CD4-positive, alpha-beta T cell (primary cell): ENCODE measurements at regions of chr17 and their contacts with region 1.

Region 1: DNA sequence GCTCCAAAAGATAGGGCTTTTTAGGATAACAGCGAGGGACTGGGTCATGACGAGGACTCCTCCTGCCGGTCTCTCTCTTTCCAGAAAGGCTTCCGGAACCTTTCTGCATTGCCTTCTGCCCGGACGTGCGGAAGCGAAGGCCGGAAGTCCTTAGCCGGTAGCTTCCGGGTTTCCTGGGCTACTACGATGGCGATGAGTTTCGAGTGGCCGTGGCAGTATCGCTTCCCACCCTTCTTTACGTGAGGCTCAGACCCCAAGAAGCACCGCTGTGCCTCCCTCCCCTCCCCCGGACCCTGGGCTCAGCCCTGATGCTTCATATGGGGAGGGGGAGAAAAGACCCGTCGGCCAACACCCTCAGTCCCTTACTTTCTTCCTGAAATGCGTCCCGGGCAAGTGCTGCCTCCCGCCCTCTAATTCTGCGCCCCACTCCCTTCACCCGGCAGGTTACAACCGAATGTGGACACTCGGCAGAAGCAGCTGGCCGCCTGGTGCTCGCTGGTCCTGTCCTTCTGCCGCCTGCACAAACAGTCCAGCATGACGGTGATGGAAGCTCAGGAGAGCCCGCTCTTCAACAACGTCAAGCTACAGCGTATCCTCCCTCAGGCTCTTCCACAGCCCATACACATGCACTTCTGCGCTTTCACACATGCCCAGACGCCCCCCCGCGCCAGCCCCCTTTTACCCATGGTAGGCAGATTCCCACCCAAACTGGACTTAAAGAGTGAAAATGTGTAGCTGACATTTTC is at the start of gene VPS25:
- DNase-seq: peak; percentile 58 to 89 (median 71)
- ATAC-seq: peak; percentile 93
- H3K4me3 ChIP-seq: peak within 1 kb of the TSS; percentile 71
- H3K4me3 Mint-ChIP-seq: peak within 1 kb of the TSS; percentile 96
- H3K27ac ChIP-seq: peak within 1 kb of the TSS; percentile 68 to 76
- H3K27ac Mint-ChIP-seq: peak within 1 kb of the TSS; percentile 92
- H3K4me1 ChIP-seq: peaks cover 14% of the 10 kb centered on the region
- H3K4me1 Mint-ChIP-seq: peaks cover 34% of the 10 kb centered on the region
- H3K27me3 ChIP-seq: no peaks in the 10 kb centered on the region
- H3K27me3 Mint-ChIP-seq: peaks cover 3% of the 10 kb centered on the region
- CTCF ChIP-seq: no peak
- total RNA-seq, gene VPS25: 40.6 to 45.7 TPM

Region 2: GRCh38 chr17:42744806-42745617 is 28.5 kb before region 1 on chr17 and contains the start of gene EZH1:
- CTCF ChIA-PET with region 1: no interaction called
- POLR2A ChIA-PET with region 1: interaction called, 3 read pairs
- intact Hi-C with region 1: loop called in 1 of 2 experiments (anchors 2 kb)
- DNase-seq: peak; percentile 77 to 97 (median 92)
- ATAC-seq: peak; percentile 92
- H3K4me3 ChIP-seq: peak within 1 kb of the TSS; percentile 86
- H3K4me3 Mint-ChIP-seq: peak within 1 kb of the TSS; percentile 96
- H3K27ac ChIP-seq: peak within 1 kb of the TSS; percentile 41 to 77
- H3K27ac Mint-ChIP-seq: peak within 1 kb of the TSS; percentile 91
- H3K4me1 ChIP-seq: peaks cover 29% of the 10 kb centered on the region
- H3K4me1 Mint-ChIP-seq: peaks cover 26% of the 10 kb centered on the region
- H3K27me3 ChIP-seq: peaks cover 0 to 3% of the 10 kb centered on the region in 2 experiments
- H3K27me3 Mint-ChIP-seq: peaks cover 5% of the 10 kb centered on the region
- CTCF ChIP-seq: no peak
- total RNA-seq, gene EZH1: 73.3 to 76.1 TPM

Region 3: GRCh38 chr17:42760652-42761581 is 12.5 kb before region 1 on chr17 and contains the start of gene RAMP2:
- CTCF ChIA-PET with region 1: interaction called, 13 read pairs
- POLR2A ChIA-PET with region 1: interaction called, 6 read pairs
- intact Hi-C with region 1: no loop called
- DNase-seq: peak in 3 of 14 experiments; percentile 13 to 41 (median 37)
- ATAC-seq: peak; percentile 39
- H3K4me3 ChIP-seq: peak within 1 kb of the TSS; percentile 10
- H3K4me3 Mint-ChIP-seq: peak within 1 kb of the TSS; percentile 67
- H3K27ac ChIP-seq: no peak within 1 kb of the TSS
- H3K27ac Mint-ChIP-seq: no peak within 1 kb of the TSS
- H3K4me1 ChIP-seq: peaks cover 15% of the 10 kb centered on the region
- H3K4me1 Mint-ChIP-seq: peaks cover 9% of the 10 kb centered on the region
- H3K27me3 ChIP-seq: peaks cover 47% of the 10 kb centered on the region in 2 experiments
- H3K27me3 Mint-ChIP-seq: peaks cover 79% of the 10 kb centered on the region
- CTCF ChIP-seq: no peak
- total RNA-seq, gene RAMP2: not detected

Region 4: GRCh38 chr17:42798383-42799380 is 25.2 kb after region 1 on chr17 and contains the starts of genes CNTD1 and COA3:
- CTCF ChIA-PET with region 1: no interaction called
- POLR2A ChIA-PET with region 1: interaction called, 4 read pairs
- intact Hi-C with region 1: loop called in 1 of 2 experiments (anchors 2 kb)
- DNase-seq: peak; percentile 59 to 86 (median 68)
- ATAC-seq: peak; percentile 99
- H3K4me3 ChIP-seq: peak within 1 kb of the TSS; percentile 92
- H3K4me3 Mint-ChIP-seq: peak within 1 kb of the TSS; percentile 92
- H3K27ac ChIP-seq: peak within 1 kb of the TSS in 1 of 2 donors; percentile 3
- H3K27ac Mint-ChIP-seq: peak within 1 kb of the TSS; percentile 63
- H3K4me1 ChIP-seq: peaks cover 30% of the 10 kb centered on the region
- H3K4me1 Mint-ChIP-seq: peaks cover 19% of the 10 kb centered on the region
- H3K27me3 ChIP-seq: no peaks in the 10 kb centered on the region
- H3K27me3 Mint-ChIP-seq: no peaks in the 10 kb centered on the region
- CTCF ChIP-seq: no peak
- total RNA-seq, gene CNTD1: not detected
- total RNA-seq, gene COA3: 4.0 to 4.5 TPM

Region 5: DNA sequence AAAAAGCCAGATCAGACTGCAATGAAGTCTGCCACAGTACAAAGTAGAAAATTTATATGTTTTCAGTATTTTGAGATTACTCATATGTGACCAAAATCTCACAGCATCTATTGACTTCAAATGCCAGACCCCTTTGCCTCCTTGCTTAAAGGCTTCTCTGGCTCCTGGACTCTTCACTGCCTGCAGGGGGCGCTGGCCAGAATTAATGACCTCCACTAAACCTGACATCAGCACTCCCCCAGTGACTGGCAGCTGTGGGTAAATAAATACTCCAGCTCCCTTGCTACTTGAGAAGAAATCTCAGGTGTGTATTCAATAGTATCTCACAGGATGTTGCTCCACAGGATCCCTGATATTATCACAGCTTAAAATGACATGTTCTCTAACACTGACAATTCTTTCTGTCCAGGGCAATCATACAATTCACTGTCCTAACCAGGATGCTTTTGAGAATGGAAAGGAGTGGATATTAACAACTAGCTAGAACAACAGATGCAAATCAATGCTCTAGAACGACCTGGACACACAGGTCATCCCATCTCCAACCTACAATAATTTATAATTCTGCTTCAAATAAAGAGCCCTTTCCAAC is 46.6 kb after region 1 on chr17:
- CTCF ChIA-PET with region 1: interaction called, 7 read pairs
- POLR2A ChIA-PET with region 1: interaction called, 17 read pairs
- intact Hi-C with region 1: loop called in 1 of 2 experiments (anchors 2 kb)
- DNase-seq: peak; percentile 29 to 79 (median 48)
- ATAC-seq: no peak
- H3K4me3 ChIP-seq: no peak overlapping the region
- H3K4me3 Mint-ChIP-seq: peak overlapping the region; percentile 43
- H3K27ac ChIP-seq: no peak overlapping the region
- H3K27ac Mint-ChIP-seq: peak overlapping the region; percentile 49
- H3K4me1 ChIP-seq: peaks cover 22% of the 10 kb centered on the region
- H3K4me1 Mint-ChIP-seq: peaks cover 28% of the 10 kb centered on the region
- H3K27me3 ChIP-seq: no peaks in the 10 kb centered on the region
- H3K27me3 Mint-ChIP-seq: no peaks in the 10 kb centered on the region
- CTCF ChIP-seq: peak; percentile 72

Region 6: DNA sequence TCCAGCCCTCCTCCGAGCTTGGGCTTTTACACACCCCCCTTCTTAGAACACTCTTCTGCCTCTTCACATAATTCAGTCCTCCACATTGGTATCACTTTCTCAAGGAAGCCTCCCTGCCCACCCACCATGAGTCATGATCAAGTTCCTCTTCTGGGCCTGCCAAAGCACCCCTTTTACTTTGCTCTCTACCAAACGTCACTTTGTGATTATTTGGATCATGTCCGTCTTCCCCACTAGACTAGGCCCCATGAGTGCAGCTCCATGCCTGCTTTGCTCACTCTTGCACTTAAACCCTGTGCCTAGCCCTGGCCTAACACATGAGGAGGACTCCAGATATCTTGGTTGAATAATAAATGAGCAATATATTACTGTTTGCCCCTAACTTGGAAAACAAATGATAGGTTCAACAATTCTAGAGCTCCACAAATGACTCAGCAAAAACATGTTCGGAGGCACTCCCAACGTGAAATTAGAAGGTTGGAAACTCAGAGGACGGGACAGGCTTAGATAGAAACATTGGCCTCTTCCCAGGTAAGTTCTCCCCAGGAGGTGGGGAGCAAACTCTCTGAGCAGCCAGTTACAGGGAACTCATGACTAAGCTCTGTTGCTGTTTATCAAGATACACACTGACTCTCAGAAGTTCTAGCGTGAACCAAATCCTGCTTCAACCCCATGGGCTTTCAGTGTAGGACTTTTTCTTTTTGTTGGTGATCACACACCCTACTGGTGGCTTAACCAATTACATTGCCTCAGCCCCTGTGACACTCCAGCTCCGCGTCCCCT is 155.4 kb after region 1 on chr17:
- CTCF ChIA-PET with region 1: no interaction called
- POLR2A ChIA-PET with region 1: no interaction called
- intact Hi-C with region 1: no loop called
- DNase-seq: peak in 4 of 14 experiments; percentile 2 to 61 (median 33)
- ATAC-seq: no peak
- H3K4me3 ChIP-seq: no peak overlapping the region
- H3K4me3 Mint-ChIP-seq: no peak overlapping the region
- H3K27ac ChIP-seq: no peak overlapping the region
- H3K27ac Mint-ChIP-seq: no peak overlapping the region
- H3K4me1 ChIP-seq: no peaks in the 10 kb centered on the region
- H3K4me1 Mint-ChIP-seq: no peaks in the 10 kb centered on the region
- H3K27me3 ChIP-seq: no peaks in the 10 kb centered on the region
- H3K27me3 Mint-ChIP-seq: peaks cover 9% of the 10 kb centered on the region
- CTCF ChIP-seq: no peak

Region 7: DNA sequence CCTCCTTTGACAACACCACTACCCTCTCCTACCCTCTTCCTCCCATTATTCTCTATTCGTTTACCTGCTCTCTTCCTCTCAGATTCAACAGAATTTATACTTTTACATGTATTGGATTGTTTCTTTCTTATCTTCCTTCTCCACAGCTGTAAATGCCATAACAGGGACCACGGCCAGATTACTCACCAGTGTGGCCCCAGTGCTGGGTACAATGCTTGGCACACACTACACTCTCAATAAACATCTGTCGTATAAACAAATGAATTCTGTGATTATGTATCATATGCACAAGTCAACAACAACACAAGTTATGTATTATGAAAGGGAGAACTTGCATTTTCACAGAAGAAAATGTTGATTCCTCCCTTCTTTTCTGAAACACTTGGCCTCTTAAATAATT is 170.7 kb after region 1 on chr17:
- CTCF ChIA-PET with region 1: no interaction called
- POLR2A ChIA-PET with region 1: no interaction called
- intact Hi-C with region 1: no loop called
- DNase-seq: no peak
- ATAC-seq: no peak
- H3K4me3 ChIP-seq: no peak overlapping the region
- H3K4me3 Mint-ChIP-seq: no peak overlapping the region
- H3K27ac ChIP-seq: no peak overlapping the region
- H3K27ac Mint-ChIP-seq: no peak overlapping the region
- H3K4me1 ChIP-seq: no peaks in the 10 kb centered on the region
- H3K4me1 Mint-ChIP-seq: no peaks in the 10 kb centered on the region
- H3K27me3 ChIP-seq: no peaks in the 10 kb centered on the region
- H3K27me3 Mint-ChIP-seq: no peaks in the 10 kb centered on the region
- CTCF ChIP-seq: no peak